ENCODE measurements at regions of chr1 and their contacts with region 1.

Region 1: DNA sequence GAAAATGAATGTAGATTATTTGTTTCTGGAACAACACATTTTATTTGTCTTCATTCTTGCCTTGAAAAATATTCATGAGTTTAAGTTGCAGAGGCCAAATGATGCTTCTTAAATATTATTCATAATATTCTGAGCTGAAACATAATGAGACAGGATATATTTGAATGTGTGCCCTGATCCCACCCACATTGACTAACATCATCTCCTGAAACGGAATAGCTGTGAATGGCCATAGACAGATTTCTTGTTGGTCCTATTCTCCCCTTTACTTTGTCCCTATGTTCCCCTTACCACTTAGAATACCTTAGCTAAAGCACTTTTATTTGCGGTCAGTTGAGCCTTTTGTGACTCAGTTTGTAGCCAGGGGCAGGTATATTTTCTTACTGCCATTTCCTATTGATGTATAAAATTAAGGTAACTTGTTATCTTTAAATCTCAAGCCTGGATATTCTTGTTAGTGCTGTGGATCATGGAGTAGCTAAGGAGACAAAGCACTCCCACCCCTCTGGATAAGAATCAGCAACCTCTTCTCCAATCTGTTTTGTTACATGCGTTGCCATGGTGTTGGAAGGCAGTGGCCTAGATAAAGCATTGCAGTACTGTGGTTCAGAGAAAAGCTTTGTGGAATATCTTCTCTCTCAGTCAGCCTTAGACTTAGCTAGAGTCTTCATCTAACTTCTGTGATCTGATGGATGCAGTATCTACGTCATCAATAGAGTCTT is 478.5 kb upstream of the DEPDC1 start:
- DNase-seq: no peak
- H3K4me3 ChIP-seq: no peak overlapping the region
- H3K4me3 Mint-ChIP-seq: no peak overlapping the region
- H3K27ac Mint-ChIP-seq: no peak overlapping the region
- H3K4me1 ChIP-seq: no peaks in the 10 kb centered on the region
- H3K4me1 Mint-ChIP-seq: no peaks in the 10 kb centered on the region
- H3K27me3 ChIP-seq: no peaks in the 10 kb centered on the region
- H3K27me3 Mint-ChIP-seq: no peaks in the 10 kb centered on the region
- CTCF ChIP-seq: no peak

Region 2: GRCh38 chr1:68819190-68819829 is 156.1 kb before region 1 on chr1:
- CTCF ChIA-PET with region 1: no interaction called
- POLR2A ChIA-PET with region 1: no interaction called
- intact Hi-C with region 1: loop called (anchors 10 kb)
- DNase-seq: peak in 1 of 2 experiments; percentile 25
- H3K4me3 ChIP-seq: no peak overlapping the region
- H3K4me3 Mint-ChIP-seq: no peak overlapping the region
- H3K27ac Mint-ChIP-seq: no peak overlapping the region
- H3K4me1 ChIP-seq: no peaks in the 10 kb centered on the region
- H3K4me1 Mint-ChIP-seq: peaks cover 6% of the 10 kb centered on the region
- H3K27me3 ChIP-seq: no peaks in the 10 kb centered on the region
- H3K27me3 Mint-ChIP-seq: peaks cover 4% of the 10 kb centered on the region
- CTCF ChIP-seq: peak; percentile 32 to 37